ENCODE measurements at regions of chr3 and their contacts with region 1.

Region 1: DNA sequence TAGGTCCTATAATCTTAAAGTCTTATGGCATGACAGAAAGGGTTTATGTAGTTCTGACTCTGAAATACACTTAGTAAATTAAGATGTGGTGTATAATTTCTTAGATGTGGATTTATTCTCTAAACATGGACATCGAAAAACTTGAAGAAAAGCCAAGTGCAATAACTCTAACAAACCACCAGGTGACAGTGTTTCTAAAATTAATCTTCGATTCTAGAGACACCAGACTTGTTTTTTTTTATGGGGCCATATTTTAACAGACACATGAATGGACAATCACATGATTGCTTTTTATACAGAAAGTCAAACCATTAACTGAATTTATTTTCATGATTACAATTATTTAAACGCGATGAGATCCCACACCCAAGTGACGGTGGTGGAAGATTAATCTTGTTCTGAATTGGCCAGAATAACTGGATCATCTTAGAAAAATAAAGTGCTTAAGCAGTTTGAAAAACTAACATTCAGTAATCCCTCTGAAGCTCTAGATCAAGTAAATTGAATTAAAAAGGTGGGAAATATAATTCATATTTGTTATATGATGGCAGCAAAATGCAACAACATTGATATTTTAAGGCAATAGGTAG is 305.1 kb downstream of the LSAMP start:
- DNase-seq: no peak

Region 2: DNA sequence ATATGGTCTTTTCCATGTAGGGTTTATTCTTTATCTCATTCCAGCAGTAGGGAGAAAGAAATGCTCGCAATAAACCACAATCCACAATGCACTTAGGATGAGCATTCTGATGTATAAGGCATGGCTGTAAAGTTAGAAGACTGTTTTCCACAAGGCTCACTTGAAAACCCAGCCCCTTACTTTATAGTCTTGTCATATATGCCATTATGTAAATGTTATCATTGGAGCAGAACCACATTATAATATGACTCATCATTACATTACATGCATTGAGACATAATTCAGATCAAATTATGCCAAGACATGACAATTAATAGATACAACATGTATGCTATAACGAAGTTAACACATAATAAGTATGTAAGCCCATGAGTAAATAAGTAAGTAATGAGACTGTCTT is 43.0 kb before region 1 on chr3:
- intact Hi-C with region 1: no loop called
- DNase-seq: no peak

Region 3: DNA sequence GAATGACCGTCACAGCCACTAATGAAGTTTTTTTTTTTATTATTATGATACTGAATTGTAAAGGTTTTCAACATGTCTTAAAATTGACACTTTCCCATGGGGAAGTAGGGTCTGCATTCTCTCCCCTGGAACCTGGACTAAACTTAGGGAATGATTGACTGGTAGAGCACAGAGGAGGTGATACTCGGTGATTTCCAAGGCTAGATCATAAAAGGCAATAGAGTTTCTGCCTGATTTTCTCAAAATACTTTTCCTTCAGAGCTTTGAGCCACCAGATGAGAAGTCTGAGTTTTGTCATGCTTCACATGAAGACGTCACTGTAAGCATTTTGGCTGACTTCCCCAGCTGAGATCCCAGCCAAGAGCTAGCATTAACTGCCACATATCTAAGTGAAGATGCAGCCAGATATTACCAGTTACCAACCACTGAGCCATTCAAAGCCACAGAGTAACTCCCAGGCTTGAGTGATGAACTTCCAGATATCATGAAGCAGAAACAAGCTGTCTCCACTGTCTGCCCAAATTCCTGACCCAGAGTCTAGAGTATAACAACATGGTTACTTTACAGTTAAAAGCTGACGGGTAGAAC is 199.3 kb after region 1 on chr3:
- intact Hi-C with region 1: loop called (anchors 10 kb)
- DNase-seq: peak in 2 of 10 donors; percentile 6 to 13

Region 4: DNA sequence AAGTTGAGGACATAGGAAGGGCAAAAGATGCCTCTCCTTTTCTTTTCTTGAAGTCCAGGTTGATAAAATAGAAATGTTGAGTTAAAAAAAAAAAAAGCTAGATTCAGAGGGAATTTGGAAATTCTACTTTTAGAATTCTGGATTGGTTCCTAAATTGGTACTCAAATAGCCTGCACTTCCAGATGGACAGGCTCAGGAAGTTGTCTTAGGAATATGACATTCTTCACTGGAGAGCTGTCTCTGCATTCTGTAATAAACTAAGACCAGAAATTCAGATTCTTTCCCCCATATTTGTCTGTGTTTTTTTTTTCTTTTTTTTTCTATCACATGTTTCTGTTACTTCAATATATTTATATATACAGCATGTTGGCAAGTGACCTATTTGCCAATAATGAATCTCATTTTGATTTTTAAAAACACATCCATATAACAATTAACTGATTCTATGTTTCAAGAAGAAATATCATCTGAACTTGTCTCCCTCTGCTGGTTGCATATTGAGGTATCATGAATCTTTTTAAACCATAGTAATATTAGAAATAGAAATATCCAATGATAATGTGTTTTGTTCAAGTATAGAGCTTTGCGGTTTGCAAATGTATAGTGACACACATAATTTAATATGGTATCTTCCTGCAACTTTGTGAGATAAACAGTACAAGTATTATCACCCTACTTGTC is 313.6 kb after region 1 on chr3:
- intact Hi-C with region 1: loop called (anchors 2 kb)
- DNase-seq: no peak

Measured in posterior cingulate gyrus (tissue), 11 donors.